Head of caudate nucleus (tissue), 42 donors: ENCODE measurements at regions of chr10 and their contacts with region 1.

Region 1: GRCh38 chr10:80504158-80504811 is 33.4 kb upstream of the SH2D4B start:
- DNase-seq: peak in 3 of 42 donors; percentile 25 to 40 (median 30)

Region 2: GRCh38 chr10:80447436-80448190 is 56.7 kb before region 1 on chr10:
- intact Hi-C with region 1: loop called (anchors 2 kb)
- DNase-seq: no peak